ENCODE measurements at regions of chr17 and their contacts with region 1.

Region 1: DNA sequence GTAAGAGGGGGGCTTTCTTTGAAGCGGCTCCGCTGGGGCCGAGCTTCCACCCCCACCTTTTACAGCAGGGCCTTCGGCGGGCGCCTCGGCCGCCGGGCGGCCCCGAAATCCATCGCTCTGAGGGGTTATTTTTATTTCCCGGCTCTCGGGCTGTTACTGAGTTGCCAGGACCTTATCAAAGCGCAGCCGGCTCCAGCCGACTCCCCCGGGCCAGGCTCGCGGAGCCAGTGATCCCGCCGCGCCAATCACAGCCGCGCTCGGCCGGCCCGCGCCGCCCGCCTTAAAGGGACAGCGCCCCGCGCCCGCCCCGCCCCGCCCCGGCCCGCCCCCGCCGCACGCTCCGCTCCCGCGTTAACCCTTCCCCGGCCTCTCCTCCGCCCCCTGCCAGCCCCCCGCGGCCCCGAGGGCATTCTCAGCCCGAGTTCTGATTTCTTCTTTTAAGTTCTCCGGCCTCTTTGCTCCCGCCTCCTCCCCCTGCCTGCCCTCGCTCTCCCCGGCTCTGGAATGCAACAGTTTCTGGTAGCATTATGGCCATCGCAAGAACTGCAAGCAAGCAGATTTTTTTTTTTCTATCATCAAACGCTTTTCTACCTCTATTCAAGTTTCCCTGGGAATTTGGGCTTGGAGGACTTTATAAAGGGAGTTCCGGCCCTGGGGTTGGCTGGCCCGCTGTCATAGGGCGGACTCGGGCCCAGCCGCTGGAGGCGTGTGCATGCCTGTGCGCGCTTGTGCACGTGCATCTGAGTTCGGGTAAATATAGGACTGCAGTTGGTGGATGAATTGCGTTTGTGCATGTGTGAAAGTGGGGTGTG is at the start of gene AXIN2:
- DNase-seq: peak; percentile 92 to 95 (median 93)
- H3K4me3 ChIP-seq: peak within 1 kb of the TSS; percentile 86
- H3K27ac ChIP-seq: peak within 1 kb of the TSS; percentile 92 to 96
- H3K4me1 ChIP-seq: peaks cover 16% of the 10 kb centered on the region
- H3K27me3 ChIP-seq: no peaks in the 10 kb centered on the region
- CTCF ChIP-seq: peak in 1 of 3 donors; percentile 34
- EP300 ChIP-seq: no peak
- POLR2A ChIP-seq: no peak
- total RNA-seq, gene AXIN2: 17.7 to 75.7 (median 44.3) TPM

Region 2: DNA sequence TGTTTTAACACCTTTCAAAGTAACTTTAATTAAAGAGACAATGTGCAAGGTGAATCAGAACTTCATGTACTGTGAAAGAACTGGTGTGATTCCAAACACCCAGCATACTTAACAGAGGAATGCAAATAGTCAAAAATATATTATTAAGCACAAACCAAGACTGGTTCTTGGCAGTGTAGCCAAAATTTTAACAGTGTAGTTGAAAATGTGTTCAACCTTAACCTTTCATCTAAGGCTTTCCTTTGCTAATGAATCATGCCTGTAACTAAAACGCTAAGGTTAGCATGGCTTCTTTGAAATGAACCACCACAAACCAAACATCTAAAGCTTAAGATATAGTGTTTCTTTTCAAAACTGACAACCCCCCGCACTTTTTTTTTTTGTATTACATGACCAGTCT is 146.2 kb after region 1 on chr17:
- intact Hi-C with region 1: loop called in 1 of 4 experiments (anchors 10 kb)
- DNase-seq: no peak
- H3K4me3 ChIP-seq: no peak overlapping the region
- H3K27ac ChIP-seq: no peak overlapping the region
- H3K4me1 ChIP-seq: peaks cover 2% of the 10 kb centered on the region
- H3K27me3 ChIP-seq: no peaks in the 10 kb centered on the region
- CTCF ChIP-seq: no peak
- EP300 ChIP-seq: no peak
- POLR2A ChIP-seq: no peak

Region 3: GRCh38 chr17:65914784-65915350 is 353.3 kb after region 1 on chr17:
- intact Hi-C with region 1: loop called in 1 of 4 experiments (anchors 5 kb)
- DNase-seq: no peak
- H3K4me3 ChIP-seq: no peak overlapping the region
- H3K27ac ChIP-seq: no peak overlapping the region
- H3K4me1 ChIP-seq: peaks cover 6% of the 10 kb centered on the region
- H3K27me3 ChIP-seq: no peaks in the 10 kb centered on the region
- CTCF ChIP-seq: no peak
- EP300 ChIP-seq: no peak
- POLR2A ChIP-seq: no peak